HepG2 (cell line): ENCODE measurements at regions of chr12 and their contacts with region 1.

Region 1: GRCh38 chr12:1795785-1796514 is 24.4 kb upstream of the LRTM2 start:
- DNase-seq: peak; percentile 56
- ATAC-seq: peak; percentile 83
- H3K4me3 ChIP-seq: peak overlapping the region in 2 of 3 experiments; percentile 16 to 56; a peak in 2 of 6 replicates
- H3K27ac ChIP-seq: no peak overlapping the region
- H3K4me1 ChIP-seq: peaks cover 19% of the 10 kb centered on the region; the same call in 1 of the 2 replicates
- H3K27me3 ChIP-seq: no peaks in the 10 kb centered on the region
- CTCF ChIP-seq: peak; percentile 91
- EP300 ChIP-seq: no peak
- POLR2A ChIP-seq: peak in 1 of 2 experiments; percentile 59; a peak in 2 of 4 replicates
- RAD21 ChIP-seq: peak; percentile 100

Region 2: DNA sequence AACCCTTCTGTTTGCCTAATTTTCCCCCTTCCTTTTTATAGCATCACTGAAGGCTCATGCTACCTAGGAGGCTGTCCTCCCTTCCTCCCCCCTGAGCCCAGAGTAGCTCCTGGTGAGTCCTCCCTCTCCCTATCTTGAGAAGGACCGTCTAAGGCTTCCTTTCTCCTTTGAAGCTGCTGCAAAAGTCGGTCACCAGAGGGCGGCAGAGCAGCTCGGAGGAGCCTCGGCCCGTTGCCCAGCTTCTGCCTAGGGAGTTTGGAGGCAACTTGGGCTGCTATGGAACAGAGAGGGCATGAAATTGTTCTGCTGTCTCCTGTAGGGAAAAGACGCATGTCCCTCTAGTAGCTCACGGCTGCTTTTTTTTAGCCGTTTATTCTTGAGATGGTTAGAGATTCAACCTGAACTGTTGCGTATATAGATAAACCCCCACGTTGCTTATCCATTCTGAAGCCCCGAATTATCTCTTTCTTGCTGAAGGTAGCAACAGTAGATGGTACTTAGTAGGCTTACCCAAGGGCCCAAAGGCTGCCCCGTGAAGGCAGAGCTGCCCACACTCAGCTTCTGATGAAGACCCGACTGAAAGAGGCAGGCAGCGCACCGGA is 161.3 kb before region 1 on chr12:
- CTCF ChIA-PET with region 1: interaction called, 15 read pairs
- POLR2A ChIA-PET with region 1: no interaction called
- in situ Hi-C with region 1: no loop called
- intact Hi-C with region 1: loop called (anchors 1 kb)
- DNase-seq: peak; percentile 27
- ATAC-seq: peak; percentile 65
- H3K4me3 ChIP-seq: no peak overlapping the region
- H3K27ac ChIP-seq: no peak overlapping the region
- H3K4me1 ChIP-seq: peaks cover 30% of the 10 kb centered on the region
- H3K27me3 ChIP-seq: peaks cover 6 to 65% of the 10 kb centered on the region in 2 experiments; a peak in 4 of 5 replicates
- CTCF ChIP-seq: peak; percentile 86
- EP300 ChIP-seq: no peak
- POLR2A ChIP-seq: no peak
- RAD21 ChIP-seq: peak; percentile 66

Region 3: DNA sequence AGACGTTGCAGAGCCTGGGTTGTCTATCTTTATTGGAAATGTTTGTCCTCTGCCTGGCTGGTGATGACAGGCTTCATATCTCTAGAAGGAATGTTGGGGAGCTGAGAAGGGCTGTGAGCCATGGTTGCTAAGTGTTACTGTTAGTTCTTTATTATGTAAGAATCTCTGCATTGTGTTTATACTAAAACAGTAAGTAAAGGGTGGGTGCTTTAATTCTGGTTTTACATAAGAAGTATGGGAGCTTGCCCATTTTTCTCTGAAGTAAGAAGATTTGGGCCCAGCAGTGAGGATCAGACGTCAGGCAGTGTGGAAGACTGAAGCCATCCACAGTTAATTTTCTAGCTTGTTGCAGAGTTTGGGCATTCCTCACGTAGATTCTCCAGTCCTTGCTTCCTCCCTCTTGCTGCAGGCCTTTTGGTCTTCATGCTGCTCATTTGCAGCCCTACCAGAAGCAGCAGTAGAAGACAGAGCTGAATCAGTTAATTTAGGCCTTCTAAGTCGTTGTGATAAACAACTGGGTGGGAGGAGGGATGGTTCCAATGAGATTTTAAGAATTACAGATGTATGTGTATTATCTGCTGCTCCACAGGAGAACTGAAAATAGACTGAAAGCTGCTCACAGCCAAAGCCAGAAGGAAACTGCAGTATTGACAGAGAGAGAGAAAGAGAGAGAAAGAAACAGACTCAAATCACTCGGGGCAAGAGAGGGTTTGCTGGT is 145.5 kb before region 1 on chr12:
- CTCF ChIA-PET with region 1: interaction called, 47 read pairs
- POLR2A ChIA-PET with region 1: interaction called, 14 read pairs
- in situ Hi-C with region 1: loop called (anchors 5 kb)
- intact Hi-C with region 1: loop called (anchors 1 kb)
- DNase-seq: no peak
- ATAC-seq: no peak
- H3K4me3 ChIP-seq: no peak overlapping the region
- H3K27ac ChIP-seq: no peak overlapping the region
- H3K4me1 ChIP-seq: peaks cover 46% of the 10 kb centered on the region
- H3K27me3 ChIP-seq: peaks cover 0 to 45% of the 10 kb centered on the region in 2 experiments; a peak in 3 of 5 replicates
- CTCF ChIP-seq: no peak
- EP300 ChIP-seq: no peak
- POLR2A ChIP-seq: no peak
- RAD21 ChIP-seq: no peak

Region 4: GRCh38 chr12:1716215-1716862 is 79.6 kb before region 1 on chr12:
- CTCF ChIA-PET with region 1: interaction called, 7 read pairs
- POLR2A ChIA-PET with region 1: no interaction called
- in situ Hi-C with region 1: no loop called
- intact Hi-C with region 1: loop called (anchors 1 kb)
- DNase-seq: no peak
- ATAC-seq: no peak
- H3K4me3 ChIP-seq: no peak overlapping the region
- H3K27ac ChIP-seq: no peak overlapping the region
- H3K4me1 ChIP-seq: peaks cover 84% of the 10 kb centered on the region
- H3K27me3 ChIP-seq: no peaks in the 10 kb centered on the region
- CTCF ChIP-seq: no peak
- EP300 ChIP-seq: no peak
- POLR2A ChIP-seq: no peak
- RAD21 ChIP-seq: no peak

Region 5: DNA sequence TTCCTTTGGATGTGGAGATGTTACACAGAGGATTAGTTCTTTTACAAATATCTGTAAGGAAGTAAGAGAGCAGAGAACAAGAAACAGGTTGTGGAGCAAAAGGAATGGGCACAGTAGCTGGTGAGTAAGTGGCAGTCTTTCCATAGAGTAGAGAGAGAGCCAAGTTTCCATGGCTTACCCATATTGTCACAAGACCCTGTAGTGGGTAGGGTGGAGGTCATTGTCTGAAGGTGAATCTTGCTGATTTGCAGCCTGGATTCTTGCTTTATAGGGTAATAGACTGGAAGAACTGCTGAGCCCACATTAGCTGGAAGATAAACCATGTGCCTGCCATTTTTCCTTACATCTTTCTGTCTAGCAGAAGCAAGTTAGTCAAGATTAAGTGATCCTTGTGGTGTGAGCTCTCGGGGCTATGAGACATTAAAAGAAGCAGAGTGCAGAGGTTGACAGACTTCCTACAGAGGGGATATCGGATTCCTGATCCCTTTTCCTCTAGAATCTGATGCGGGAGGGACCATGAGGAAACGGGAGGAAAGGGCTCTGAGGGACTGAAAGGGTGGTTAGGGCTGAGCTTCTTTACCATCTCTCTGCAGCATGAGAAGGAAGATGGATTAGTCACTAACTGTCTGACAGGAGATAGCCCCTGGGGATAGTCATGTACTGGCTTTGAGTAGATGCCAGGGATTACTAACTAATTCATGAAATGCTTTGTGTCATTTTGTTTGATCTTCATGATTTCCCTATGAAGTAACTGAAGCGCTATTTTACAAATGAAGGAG is 19.6 kb before region 1 on chr12:
- CTCF ChIA-PET with region 1: no interaction called
- POLR2A ChIA-PET with region 1: no interaction called
- in situ Hi-C with region 1: no loop called
- intact Hi-C with region 1: no loop called
- DNase-seq: no peak
- ATAC-seq: no peak
- H3K4me3 ChIP-seq: no peak overlapping the region
- H3K27ac ChIP-seq: peak overlapping the region; percentile 8
- H3K4me1 ChIP-seq: peaks cover 21% of the 10 kb centered on the region
- H3K27me3 ChIP-seq: no peaks in the 10 kb centered on the region
- CTCF ChIP-seq: no peak
- EP300 ChIP-seq: no peak
- POLR2A ChIP-seq: no peak
- RAD21 ChIP-seq: no peak

Region 6: DNA sequence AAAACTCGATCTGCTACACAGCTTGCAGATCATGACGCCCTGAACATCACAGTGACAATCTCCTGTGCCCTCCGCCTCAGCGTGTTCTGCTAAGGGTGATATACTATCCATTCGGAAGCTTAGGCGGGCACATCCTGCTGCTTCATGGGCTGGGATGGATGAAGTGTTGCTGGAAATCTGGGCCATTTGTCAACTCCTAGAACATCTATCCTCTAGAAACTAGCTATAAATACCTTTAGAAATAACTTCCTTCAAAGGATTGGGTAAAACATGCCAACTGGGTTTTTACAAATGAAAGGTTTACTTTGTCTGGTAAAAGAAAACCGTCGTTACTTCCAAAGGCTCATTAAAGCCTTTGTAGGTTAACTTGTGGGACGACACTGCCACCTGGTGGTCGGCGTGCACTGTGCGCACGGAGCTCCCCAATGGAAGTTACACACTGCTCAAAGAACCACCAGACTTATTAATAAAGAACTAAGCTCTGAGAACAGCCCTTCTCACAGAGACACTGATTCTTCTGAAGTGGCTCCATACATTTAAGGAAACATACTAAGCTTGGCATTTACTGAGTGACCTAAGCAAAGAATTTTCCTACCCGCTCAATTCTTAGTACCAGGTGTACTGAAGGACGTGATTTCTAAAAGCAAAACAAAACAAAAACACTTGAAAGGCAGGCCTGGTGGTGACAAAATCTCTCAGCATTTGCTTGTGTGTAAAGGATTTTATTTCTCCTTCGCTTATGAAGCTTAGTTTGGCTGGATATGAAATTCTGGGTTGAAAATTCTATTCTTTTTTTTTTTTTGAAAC is 144.1 kb after region 1 on chr12:
- CTCF ChIA-PET with region 1: interaction called, 88 read pairs
- POLR2A ChIA-PET with region 1: interaction called, 6 read pairs
- in situ Hi-C with region 1: loop called (anchors 5 kb)
- intact Hi-C with region 1: loop called (anchors 1 kb)
- DNase-seq: peak; percentile 55
- ATAC-seq: peak; percentile 94
- H3K4me3 ChIP-seq: no peak overlapping the region
- H3K27ac ChIP-seq: no peak overlapping the region
- H3K4me1 ChIP-seq: peaks cover 10% of the 10 kb centered on the region
- H3K27me3 ChIP-seq: no peaks in the 10 kb centered on the region
- CTCF ChIP-seq: peak; percentile 91
- EP300 ChIP-seq: no peak
- POLR2A ChIP-seq: no peak
- RAD21 ChIP-seq: peak; percentile 89

Region 7: DNA sequence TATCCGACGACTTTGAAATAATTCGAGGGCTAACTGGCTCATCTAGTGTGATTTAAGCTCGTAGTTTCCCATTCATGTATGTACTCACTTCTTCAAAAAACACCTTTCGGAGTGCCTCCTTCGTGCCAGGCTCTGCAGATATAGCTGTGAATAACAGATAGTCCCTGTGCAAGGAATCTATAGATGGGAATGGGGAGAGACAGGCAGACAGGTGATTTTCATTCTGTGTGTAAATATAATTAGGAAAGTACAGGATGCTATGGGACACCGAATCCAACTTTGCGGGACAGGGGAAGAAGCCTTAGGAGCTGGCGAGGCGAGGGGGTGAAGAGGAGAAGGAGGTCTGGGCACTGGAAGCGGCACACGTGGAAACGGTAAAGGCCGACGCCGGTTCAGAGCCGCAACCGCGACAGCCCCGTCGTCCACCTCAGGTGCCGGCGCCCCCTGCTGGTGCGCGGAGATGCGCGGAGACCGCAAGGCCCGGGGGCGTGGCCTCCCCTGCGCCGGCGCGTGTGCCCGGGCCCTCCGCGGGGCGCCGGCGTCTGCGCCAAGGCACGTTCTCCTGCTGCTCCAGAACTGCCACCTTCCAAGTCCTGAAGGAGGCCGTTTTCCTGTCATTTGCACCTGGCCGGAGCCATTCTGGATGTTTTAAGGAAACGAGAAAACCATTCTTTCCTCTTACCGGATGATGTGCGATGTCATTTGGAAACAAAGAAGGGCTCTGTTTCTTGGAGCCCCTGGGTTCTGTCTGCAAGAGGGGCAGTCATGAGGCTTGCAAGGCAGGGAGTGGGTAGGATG is 238.9 kb after region 1 on chr12:
- CTCF ChIA-PET with region 1: interaction called, 4 read pairs
- POLR2A ChIA-PET with region 1: no interaction called
- in situ Hi-C with region 1: loop called (anchors 10 kb)
- intact Hi-C with region 1: loop called (anchors 5 kb)
- DNase-seq: peak; percentile 50
- ATAC-seq: peak; percentile 98
- H3K4me3 ChIP-seq: peak overlapping the region; percentile 6 to 65 (median 18)
- H3K27ac ChIP-seq: no peak overlapping the region
- H3K4me1 ChIP-seq: peaks cover 13% of the 10 kb centered on the region
- H3K27me3 ChIP-seq: peaks cover 3 to 61% of the 10 kb centered on the region in 2 experiments; a peak in 4 of 5 replicates
- CTCF ChIP-seq: peak; percentile 92
- EP300 ChIP-seq: no peak
- POLR2A ChIP-seq: no peak
- RAD21 ChIP-seq: peak; percentile 90